OCI-LY7 (cell line): ENCODE measurements at regions of chr6 and their contacts with region 1.

Region 1: DNA sequence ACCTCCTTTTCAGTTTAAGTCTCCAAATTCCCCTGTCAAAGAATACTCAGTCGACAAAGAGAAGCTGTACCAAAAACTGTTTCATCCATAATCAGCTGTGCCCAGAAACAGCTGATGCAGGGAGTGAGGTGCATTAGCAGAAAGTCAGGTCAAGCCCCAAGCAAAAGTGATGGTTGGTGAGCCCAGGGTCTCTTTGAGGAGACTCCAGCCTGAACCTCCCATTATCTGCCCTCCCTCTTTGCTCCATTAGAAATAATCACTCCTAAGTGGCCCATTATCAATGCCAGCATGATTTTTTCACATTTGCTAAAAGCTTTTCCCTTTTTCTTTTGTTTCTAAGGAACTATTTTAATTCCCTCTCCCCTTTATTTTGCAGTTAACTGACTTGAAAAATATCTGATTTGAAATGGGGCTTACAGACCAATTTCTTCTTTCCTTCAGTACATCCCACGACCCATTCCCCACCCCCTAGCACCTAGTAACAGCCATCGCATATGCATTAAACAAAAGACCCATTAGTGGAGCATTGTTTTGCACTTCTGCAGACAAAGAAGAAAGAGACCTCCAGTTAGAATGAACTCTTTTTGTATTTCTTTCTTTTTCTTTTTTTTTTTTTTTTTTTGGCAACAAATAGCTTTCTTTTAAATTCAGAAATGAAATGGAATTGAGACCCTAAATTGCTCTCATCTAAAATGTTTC is 257.0 kb downstream of the GRIK2 start:
- DNase-seq: no peak
- H3K4me3 ChIP-seq: no peak overlapping the region
- H3K27ac ChIP-seq: no peak overlapping the region
- H3K4me1 ChIP-seq: no peaks in the 10 kb centered on the region
- CTCF ChIP-seq: no peak

Region 2: GRCh38 chr6:101401792-101402621 is 248.5 kb before region 1 on chr6:
- CTCF ChIA-PET with region 1: no interaction called
- POLR2A ChIA-PET with region 1: interaction called, 3 read pairs
- intact Hi-C with region 1: loop called (anchors 10 kb)
- DNase-seq: no peak
- H3K4me3 ChIP-seq: no peak overlapping the region
- H3K27ac ChIP-seq: no peak overlapping the region
- H3K4me1 ChIP-seq: no peaks in the 10 kb centered on the region
- CTCF ChIP-seq: no peak